Posterior vena cava (tissue), 2 donors: ENCODE measurements at regions of chr6 and their contacts with region 1.

Region 1: GRCh38 chr6:85856235-85856634 is 213.5 kb upstream of the SYNCRIP start:
- DNase-seq: no peak

Region 2: DNA sequence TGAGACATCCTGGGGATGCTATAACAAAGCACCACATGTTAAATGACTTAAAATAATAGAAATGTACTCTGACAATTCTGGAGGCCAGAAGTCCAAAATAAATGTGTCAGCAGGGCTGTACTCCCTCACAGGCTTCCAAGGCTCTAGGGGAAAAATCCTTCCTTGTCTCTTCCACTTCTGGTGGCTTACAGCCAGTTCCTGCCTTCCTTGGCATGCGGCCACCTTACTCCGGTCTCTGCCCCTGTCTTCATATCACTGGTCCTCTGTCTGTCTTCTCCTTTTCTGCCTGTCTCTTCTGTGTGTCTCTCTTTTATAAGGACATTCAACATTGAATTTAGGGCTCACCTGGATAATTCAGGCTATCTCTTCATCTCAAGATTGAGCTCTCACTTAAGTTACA is 58.2 kb before region 1 on chr6:
- intact Hi-C with region 1: loop called in 1 of 2 experiments (anchors 10 kb)
- DNase-seq: no peak

Region 3: GRCh38 chr6:86961455-86962200 is 1105.4 kb after region 1 on chr6:
- intact Hi-C with region 1: no loop called
- DNase-seq: no peak